ENCODE measurements at regions of chr3 and their contacts with region 1.

Region 1: GRCh38 chr3:150996731-150997130 is 24.2 kb upstream of the CLRN1 start:
- DNase-seq: no peak
- H3K4me3 ChIP-seq: no peak overlapping the region
- H3K27ac ChIP-seq: no peak overlapping the region
- H3K4me1 ChIP-seq: peaks cover 0 to 11% (median 1%) of the 10 kb centered on the region in 4 experiments; a peak in 3 of 7 replicates
- H3K27me3 ChIP-seq: no peaks in the 10 kb centered on the region
- CTCF ChIP-seq: no peak
- EP300 ChIP-seq: no peak
- POLR2A ChIP-seq: no peak
- RAD21 ChIP-seq: no peak

Region 2: DNA sequence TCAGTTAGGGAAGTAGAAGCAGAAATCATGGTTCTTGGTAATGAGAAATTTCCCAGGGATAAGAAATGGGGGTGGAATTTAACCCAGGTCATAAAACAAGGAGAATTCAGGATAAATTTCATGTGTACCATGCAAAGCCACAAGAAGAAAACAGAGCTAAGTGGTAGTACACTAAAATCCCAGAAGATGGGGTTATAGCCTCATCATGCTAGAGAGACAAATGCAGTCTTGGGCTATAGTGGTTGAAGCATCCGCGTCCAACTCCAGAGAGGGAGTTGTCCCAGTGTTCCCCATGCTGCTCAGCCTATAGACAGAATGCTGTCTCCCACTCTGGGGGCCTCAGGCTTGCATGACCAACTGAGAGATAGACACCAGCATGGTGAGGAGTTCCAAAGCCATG is 12.0 kb after region 1 on chr3:
- CTCF ChIA-PET with region 1: interaction called, 10 read pairs
- POLR2A ChIA-PET with region 1: no interaction called
- DNase-seq: no peak
- H3K4me3 ChIP-seq: no peak overlapping the region
- H3K27ac ChIP-seq: no peak overlapping the region
- H3K4me1 ChIP-seq: peaks cover 0 to 2% (median 0%) of the 10 kb centered on the region in 4 experiments; a peak in 1 of 7 replicates
- H3K27me3 ChIP-seq: no peaks in the 10 kb centered on the region
- CTCF ChIP-seq: peak in 1 of 3 experiments; percentile 32; a peak in 2 of 4 replicates
- EP300 ChIP-seq: no peak
- POLR2A ChIP-seq: no peak
- RAD21 ChIP-seq: peak; percentile 68 to 76